Dendritic cell treated with granulocyte-macrophage colony-stimulating factor and Interleukin-4, amounts not matched to agents 40 ng/mL and 50 ng/mL, for 4 days (primary cell): ENCODE measurements at regions of chr9 and their contacts with region 1.

Region 1: DNA sequence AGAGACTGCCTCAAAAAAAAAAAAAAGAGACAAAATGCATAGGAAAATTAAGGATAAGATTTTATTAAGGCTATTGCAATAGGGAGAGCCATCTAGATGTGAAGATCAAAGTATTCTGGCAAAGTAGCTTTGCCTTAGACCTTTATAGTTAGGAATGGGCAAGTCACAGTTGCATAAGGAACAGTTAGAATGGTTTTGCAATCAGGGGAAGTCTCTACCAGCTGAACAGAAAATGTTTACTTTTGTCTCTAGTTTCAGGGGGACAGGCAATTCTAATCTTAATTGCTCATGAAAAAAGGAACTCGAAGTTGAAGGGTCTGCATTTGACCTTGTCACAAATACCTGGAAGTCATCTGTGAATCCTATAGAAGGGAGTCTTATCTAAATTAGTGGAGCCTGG is 13.1 kb upstream of the ATP6V1G1 start:
- H3K4me3 Mint-ChIP-seq: no peak overlapping the region
- H3K27ac Mint-ChIP-seq: no peak overlapping the region
- H3K4me1 Mint-ChIP-seq: peaks cover 26% of the 10 kb centered on the region
- H3K27me3 Mint-ChIP-seq: no peaks in the 10 kb centered on the region

Region 2: DNA sequence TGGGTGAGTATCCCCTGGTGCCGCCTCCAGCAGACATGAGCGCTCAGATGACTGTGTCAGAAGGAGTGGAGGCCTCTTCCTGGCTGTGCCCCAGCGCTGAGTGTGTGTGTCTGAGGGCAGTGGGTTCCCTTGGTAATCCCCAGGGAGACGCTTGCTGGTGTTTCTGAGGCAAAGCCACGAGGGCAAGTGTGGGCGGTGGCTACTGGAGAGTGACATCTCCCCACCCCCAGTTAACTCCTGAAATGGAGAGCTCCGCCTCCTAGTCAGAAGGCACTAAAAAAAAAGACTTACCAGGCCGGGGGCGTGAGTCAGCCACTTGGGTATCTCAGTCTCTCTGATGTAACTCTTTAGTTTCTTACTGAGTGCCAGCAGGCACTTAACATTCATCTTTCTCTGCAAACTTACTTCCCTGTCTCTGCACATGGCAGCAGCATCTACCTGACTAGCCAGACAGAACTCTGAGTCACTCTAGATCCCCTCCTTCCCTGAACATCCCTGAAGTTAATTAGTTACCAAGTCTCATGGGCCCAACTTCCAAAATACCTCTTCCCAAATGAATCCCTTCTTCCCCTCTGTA is 225.4 kb before region 1 on chr9:
- intact Hi-C with region 1: no loop called
- H3K4me3 Mint-ChIP-seq: no peak overlapping the region
- H3K27ac Mint-ChIP-seq: peak overlapping the region; percentile 50
- H3K4me1 Mint-ChIP-seq: peaks cover 32% of the 10 kb centered on the region
- H3K27me3 Mint-ChIP-seq: no peaks in the 10 kb centered on the region

Region 3: DNA sequence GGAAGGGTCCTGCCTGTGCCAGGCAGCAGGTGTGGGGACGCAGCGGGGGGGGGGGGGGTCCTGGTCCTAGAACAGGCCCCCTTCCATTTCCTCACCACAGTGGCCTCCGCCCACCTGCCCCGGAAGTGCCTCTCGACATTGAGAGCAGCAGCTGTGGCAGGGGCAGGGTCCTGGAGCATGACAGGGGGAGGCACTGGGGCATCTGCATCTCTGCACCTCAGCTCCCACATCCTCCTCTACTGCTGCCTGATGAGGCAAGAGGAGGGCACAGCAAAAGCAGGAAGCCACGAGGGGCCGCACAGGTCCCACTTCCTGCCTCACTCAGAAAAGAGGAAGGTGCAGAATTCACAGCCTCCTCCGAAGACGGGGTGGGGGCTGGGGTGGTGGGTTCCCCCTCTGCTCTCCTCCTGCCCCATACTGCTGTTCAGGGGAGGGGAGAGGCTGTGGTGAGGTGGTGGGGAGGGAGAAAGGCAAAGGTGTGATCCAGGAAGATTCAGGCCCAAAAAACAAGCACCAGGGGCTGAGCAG is 201.5 kb before region 1 on chr9:
- intact Hi-C with region 1: no loop called
- H3K4me3 Mint-ChIP-seq: peak overlapping the region; percentile 18
- H3K27ac Mint-ChIP-seq: peak overlapping the region; percentile 37
- H3K4me1 Mint-ChIP-seq: peaks cover 82% of the 10 kb centered on the region
- H3K27me3 Mint-ChIP-seq: no peaks in the 10 kb centered on the region

Region 4: GRCh38 chr9:114587385-114588202 is 13.2 kb after region 1 on chr9 and contains the start of gene ATP6V1G1:
- intact Hi-C with region 1: loop called (anchors 1 kb)
- H3K4me3 Mint-ChIP-seq: peak within 1 kb of the TSS; percentile 98
- H3K27ac Mint-ChIP-seq: peak within 1 kb of the TSS; percentile 100
- H3K4me1 Mint-ChIP-seq: peaks cover 46% of the 10 kb centered on the region
- H3K27me3 Mint-ChIP-seq: no peaks in the 10 kb centered on the region